Activated CD4-positive, alpha-beta T cell treated with anti-CD3 and anti-CD28 coated beads, Interleukin-2, amount 10 ng/mL, durations not matched to agents 24 days and 14 days (primary cell): ENCODE measurements at regions of chr15 and their contacts with region 1.

Region 1: GRCh38 chr15:56245871-56246814 is 2.5 kb upstream of the RFX7 start:
- DNase-seq: peak; percentile 97
- H3K4me3 Mint-ChIP-seq: peak overlapping the region; percentile 98
- H3K27ac Mint-ChIP-seq: peak overlapping the region; percentile 99
- H3K4me1 Mint-ChIP-seq: peaks cover 29% of the 10 kb centered on the region
- H3K27me3 Mint-ChIP-seq: peaks cover 9% of the 10 kb centered on the region

Region 2: GRCh38 chr15:55407949-55408791 is 838.0 kb before region 1 on chr15 and contains the starts of genes CCPG1 and PIERCE2:
- intact Hi-C with region 1: loop called (anchors 10 kb)
- DNase-seq: peak; percentile 97
- H3K4me3 Mint-ChIP-seq: peak within 1 kb of the TSS; percentile 87
- H3K27ac Mint-ChIP-seq: peak within 1 kb of the TSS; percentile 90
- H3K4me1 Mint-ChIP-seq: peaks cover 27% of the 10 kb centered on the region
- H3K27me3 Mint-ChIP-seq: no peaks in the 10 kb centered on the region
- total RNA-seq, gene CCPG1: 9.0 and 10.2 TPM in 2 replicates
- total RNA-seq, gene PIERCE2: 0.49 TPM in 1 of 2 replicates, not detected in the other

Region 3: GRCh38 chr15:56042982-56043980 is 202.9 kb before region 1 on chr15:
- intact Hi-C with region 1: loop called (anchors 2 kb)
- DNase-seq: peak; percentile 89
- H3K4me3 Mint-ChIP-seq: peak overlapping the region; percentile 65
- H3K27ac Mint-ChIP-seq: peak overlapping the region; percentile 68
- H3K4me1 Mint-ChIP-seq: peaks cover 30% of the 10 kb centered on the region
- H3K27me3 Mint-ChIP-seq: peaks cover 2% of the 10 kb centered on the region

Region 4: DNA sequence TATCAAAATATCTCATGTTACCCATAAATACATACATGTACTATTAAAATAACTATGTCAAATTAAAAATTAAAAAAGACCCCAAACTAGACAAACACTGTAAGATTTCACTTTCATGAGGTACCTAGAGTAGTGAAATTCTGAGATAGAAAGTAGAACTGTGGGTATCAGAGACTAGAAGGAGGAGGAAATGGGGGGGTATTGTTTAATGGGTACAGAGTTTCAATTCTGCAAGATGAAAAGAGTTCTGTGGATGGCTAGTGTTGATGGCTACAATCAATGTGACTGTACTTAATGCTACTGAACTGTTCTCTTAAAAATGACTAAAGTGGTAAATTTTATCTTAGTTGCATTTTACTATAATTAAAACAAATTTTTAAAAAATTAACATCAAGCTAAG is 39.1 kb before region 1 on chr15:
- intact Hi-C with region 1: loop called (anchors 5 kb)
- DNase-seq: no peak
- H3K4me3 Mint-ChIP-seq: no peak overlapping the region
- H3K27ac Mint-ChIP-seq: no peak overlapping the region
- H3K4me1 Mint-ChIP-seq: peaks cover 49% of the 10 kb centered on the region
- H3K27me3 Mint-ChIP-seq: no peaks in the 10 kb centered on the region

Region 5: GRCh38 chr15:56428821-56429458 is 182.8 kb after region 1 on chr15:
- intact Hi-C with region 1: loop called (anchors 1 kb)
- DNase-seq: no peak
- H3K4me3 Mint-ChIP-seq: no peak overlapping the region
- H3K27ac Mint-ChIP-seq: no peak overlapping the region
- H3K4me1 Mint-ChIP-seq: no peaks in the 10 kb centered on the region
- H3K27me3 Mint-ChIP-seq: peaks cover 2% of the 10 kb centered on the region

Region 6: GRCh38 chr15:56786966-56787365 is 540.8 kb after region 1 on chr15:
- intact Hi-C with region 1: loop called (anchors 10 kb)
- DNase-seq: no peak
- H3K4me3 Mint-ChIP-seq: peak overlapping the region; percentile 42
- H3K27ac Mint-ChIP-seq: peak overlapping the region; percentile 74
- H3K4me1 Mint-ChIP-seq: peaks cover 15% of the 10 kb centered on the region
- H3K27me3 Mint-ChIP-seq: no peaks in the 10 kb centered on the region

Region 7: DNA sequence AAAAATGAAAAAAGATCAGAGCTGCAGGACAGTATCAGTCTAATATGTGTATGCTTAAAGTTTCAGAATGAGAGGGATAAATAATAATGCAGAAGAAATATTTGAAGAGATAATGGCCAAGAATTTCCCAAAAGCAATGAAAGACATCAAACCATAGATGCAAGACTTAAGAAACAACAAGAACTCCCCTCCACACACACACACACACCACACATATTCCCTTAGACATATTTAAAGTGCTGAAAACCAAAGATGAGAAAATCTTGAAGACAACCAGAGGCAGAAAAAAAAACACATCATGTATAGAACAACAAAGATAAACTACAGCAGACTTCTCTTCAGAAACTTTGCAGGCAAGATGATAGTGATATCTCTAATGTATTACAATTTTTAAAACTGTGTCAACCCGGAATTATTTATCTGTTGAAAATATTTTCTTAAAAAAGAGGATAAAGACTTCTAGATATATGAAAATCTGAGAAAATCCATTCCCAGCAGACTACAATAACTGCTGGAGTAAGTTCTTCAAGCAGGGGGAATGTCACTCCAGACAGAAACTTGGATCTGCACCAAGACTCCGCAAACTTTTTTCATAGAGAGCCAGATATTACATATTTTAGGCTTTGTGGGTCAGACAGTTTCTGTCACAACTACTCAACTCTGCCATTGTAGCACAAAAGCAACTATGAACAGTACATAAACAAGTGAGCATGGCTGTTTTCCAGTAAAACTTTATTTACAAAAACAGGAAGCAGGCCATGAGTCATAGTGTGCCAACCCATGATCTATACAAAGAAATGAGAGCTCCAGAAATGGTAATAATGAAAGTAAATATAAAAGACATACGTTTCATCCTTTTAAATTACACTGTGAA is 906.8 kb after region 1 on chr15:
- intact Hi-C with region 1: loop called (anchors 5 kb)
- DNase-seq: peak; percentile 66
- H3K4me3 Mint-ChIP-seq: peak overlapping the region; percentile 53
- H3K27ac Mint-ChIP-seq: peak overlapping the region; percentile 72
- H3K4me1 Mint-ChIP-seq: peaks cover 24% of the 10 kb centered on the region
- H3K27me3 Mint-ChIP-seq: no peaks in the 10 kb centered on the region